ENCODE measurements at regions of chr12 and their contacts with region 1.

Region 1: GRCh38 chr12:104181313-104181712 is 34.3 kb upstream of the TXNRD1 start:
- DNase-seq: no peak
- H3K4me3 ChIP-seq: no peak overlapping the region
- H3K27ac ChIP-seq: no peak overlapping the region
- H3K4me1 ChIP-seq: no peaks in the 10 kb centered on the region
- H3K27me3 ChIP-seq: no peaks in the 10 kb centered on the region
- CTCF ChIP-seq: no peak

Region 2: DNA sequence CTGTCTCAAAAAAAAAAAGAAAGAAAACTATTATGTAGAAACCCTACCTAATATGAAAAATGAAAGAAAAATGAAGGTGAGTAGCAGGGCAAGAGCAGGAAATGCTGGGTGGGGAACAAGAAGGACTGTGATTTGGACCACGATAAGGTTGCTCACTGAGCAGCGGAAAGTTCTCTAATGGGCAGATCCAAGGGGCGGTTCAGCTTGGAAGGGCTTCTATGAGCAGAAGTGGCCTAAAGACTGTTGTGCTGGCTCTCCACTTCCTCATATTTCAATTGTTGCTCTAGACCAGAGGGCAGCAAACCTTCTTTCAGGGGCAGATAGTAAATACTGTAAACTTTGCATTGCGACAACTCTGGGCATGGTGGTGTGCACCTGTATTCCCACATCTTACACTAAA is 27.0 kb before region 1 on chr12:
- CTCF ChIA-PET with region 1: no interaction called
- POLR2A ChIA-PET with region 1: no interaction called
- intact Hi-C with region 1: no loop called
- DNase-seq: no peak
- H3K4me3 ChIP-seq: no peak overlapping the region
- H3K27ac ChIP-seq: no peak overlapping the region
- H3K4me1 ChIP-seq: no peaks in the 10 kb centered on the region
- H3K27me3 ChIP-seq: no peaks in the 10 kb centered on the region
- CTCF ChIP-seq: no peak

Region 3: DNA sequence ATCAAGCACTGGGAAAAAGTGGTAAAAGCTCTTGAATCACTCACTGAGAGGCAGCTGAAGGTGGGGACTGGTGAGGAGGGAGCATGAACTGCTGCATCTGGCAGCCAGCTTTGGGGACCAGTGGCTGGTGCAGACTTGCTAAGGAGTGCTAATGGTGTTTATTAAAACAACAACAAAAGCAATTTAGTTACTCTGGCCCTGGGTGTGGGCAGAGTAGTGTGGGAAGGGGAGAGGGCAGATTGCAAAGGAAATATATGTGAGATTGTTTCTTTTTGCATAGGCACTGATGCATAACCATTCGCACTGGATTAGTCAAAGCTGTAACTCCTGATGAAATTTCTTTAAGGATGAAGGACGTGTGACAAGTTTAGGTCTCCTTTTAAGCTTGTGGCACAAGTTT is 42.4 kb after region 1 on chr12:
- CTCF ChIA-PET with region 1: no interaction called
- POLR2A ChIA-PET with region 1: no interaction called
- intact Hi-C with region 1: loop called (anchors 2 kb)
- DNase-seq: no peak
- H3K4me3 ChIP-seq: no peak overlapping the region
- H3K27ac ChIP-seq: no peak overlapping the region
- H3K4me1 ChIP-seq: peaks cover 36% of the 10 kb centered on the region
- H3K27me3 ChIP-seq: no peaks in the 10 kb centered on the region
- CTCF ChIP-seq: no peak